ENCODE measurements at regions of chr10 and their contacts with region 1.

Region 1: DNA sequence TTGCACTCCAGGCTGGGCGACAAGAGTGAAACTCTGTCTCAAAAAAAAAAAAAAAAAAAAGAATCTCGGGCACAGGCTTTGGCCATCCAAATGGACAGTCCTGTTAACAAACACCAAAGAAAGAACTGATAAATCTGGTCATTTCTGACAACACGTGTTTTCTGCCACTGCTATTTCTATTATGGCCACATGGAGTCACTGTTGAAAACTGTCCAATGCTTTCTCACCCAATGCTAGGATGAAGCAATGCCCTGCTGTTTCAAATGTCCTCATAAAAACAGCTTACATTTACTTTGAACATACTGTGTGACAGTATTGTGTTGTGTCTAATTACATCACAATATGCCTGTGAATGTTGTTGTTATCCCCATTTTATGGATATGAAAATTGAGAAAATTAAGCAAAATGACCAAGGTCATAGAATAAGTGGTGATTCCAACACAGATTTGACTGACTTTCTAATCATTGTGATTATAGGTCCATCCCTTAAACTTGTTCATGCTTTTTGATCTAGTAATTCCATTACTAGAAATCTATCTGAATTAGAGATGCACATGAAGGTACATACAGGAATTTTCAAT is 19.9 kb upstream of the MAP3K8 start:
- DNase-seq: peak in 6 of 35 experiments; percentile 14 to 76 (median 23)
- ATAC-seq: peak; percentile 47 to 67 (median 56)
- H3K4me3 ChIP-seq: no peak overlapping the region
- H3K4me3 Mint-ChIP-seq: no peak overlapping the region
- H3K27ac ChIP-seq: no peak overlapping the region
- H3K27ac Mint-ChIP-seq: no peak overlapping the region
- H3K4me1 ChIP-seq: peaks cover 7% of the 10 kb centered on the region in 2 experiments
- H3K4me1 Mint-ChIP-seq: peaks cover 15 to 21% (median 19%) of the 10 kb centered on the region in 3 donors
- H3K27me3 ChIP-seq: no peaks in the 10 kb centered on the region
- H3K27me3 Mint-ChIP-seq: no peaks in the 10 kb centered on the region

Region 2: DNA sequence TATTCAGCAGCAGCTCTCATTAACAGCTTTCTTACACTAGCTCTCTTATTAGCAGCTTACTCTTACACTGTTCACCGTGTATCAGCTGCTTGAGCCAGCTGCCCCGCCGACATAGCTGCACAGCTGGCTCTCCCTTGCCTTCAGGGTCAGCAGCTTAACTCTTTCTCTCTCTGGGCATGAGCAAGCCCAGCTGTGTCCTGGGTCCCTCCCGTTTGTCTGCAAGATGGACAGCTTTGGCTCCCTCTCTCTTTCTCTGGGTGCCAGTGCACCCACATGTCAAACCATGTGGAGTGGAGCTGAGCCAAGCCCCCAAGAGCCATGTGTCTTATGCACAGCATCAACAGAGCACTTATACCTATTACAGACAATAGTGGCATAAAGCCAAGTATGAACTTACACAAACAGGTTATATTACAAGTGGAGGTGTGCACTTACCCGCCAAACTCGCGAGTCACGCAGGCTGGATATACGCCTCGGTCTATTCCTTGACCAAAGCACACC is 29.3 kb before region 1 on chr10:
- CTCF ChIA-PET with region 1: interaction called in 1 of 2 experiments, 3 read pairs
- POLR2A ChIA-PET with region 1: interaction called, 3 to 11 read pairs
- DNase-seq: peak in 2 of 35 experiments; percentile 15 to 24
- ATAC-seq: peak in 1 of 4 experiments; percentile 51
- H3K4me3 ChIP-seq: no peak overlapping the region
- H3K4me3 Mint-ChIP-seq: no peak overlapping the region
- H3K27ac ChIP-seq: no peak overlapping the region
- H3K27ac Mint-ChIP-seq: no peak overlapping the region
- H3K4me1 ChIP-seq: no peaks in the 10 kb centered on the region
- H3K4me1 Mint-ChIP-seq: no peaks in the 10 kb centered on the region
- H3K27me3 ChIP-seq: peaks cover 0 to 16% of the 10 kb centered on the region in 2 experiments
- H3K27me3 Mint-ChIP-seq: peaks cover 7 to 15% of the 10 kb centered on the region in 2 donors

Region 3: GRCh38 chr10:30403494-30403893 is 10.6 kb before region 1 on chr10:
- CTCF ChIA-PET with region 1: no interaction called
- POLR2A ChIA-PET with region 1: no interaction called
- DNase-seq: no peak
- ATAC-seq: no peak
- H3K4me3 ChIP-seq: no peak overlapping the region
- H3K4me3 Mint-ChIP-seq: no peak overlapping the region
- H3K27ac ChIP-seq: no peak overlapping the region
- H3K27ac Mint-ChIP-seq: no peak overlapping the region
- H3K4me1 ChIP-seq: peaks cover 3 to 8% of the 10 kb centered on the region in 2 experiments
- H3K4me1 Mint-ChIP-seq: peaks cover 7 to 9% (median 7%) of the 10 kb centered on the region in 3 donors
- H3K27me3 ChIP-seq: peaks cover 0 to 8% of the 10 kb centered on the region in 2 experiments
- H3K27me3 Mint-ChIP-seq: no peaks in the 10 kb centered on the region

Region 4: GRCh38 chr10:30534465-30535144 is 120.5 kb after region 1 on chr10:
- CTCF ChIA-PET with region 1: interaction called, 10 to 19 read pairs
- POLR2A ChIA-PET with region 1: interaction called in 1 of 2 experiments, 4 read pairs
- DNase-seq: peak; percentile 37 to 89 (median 63)
- ATAC-seq: peak; percentile 35 to 62 (median 54)
- H3K4me3 ChIP-seq: no peak overlapping the region
- H3K4me3 Mint-ChIP-seq: no peak overlapping the region
- H3K27ac ChIP-seq: no peak overlapping the region
- H3K27ac Mint-ChIP-seq: peak overlapping the region in 1 of 2 donors; percentile 6
- H3K4me1 ChIP-seq: peaks cover 0 to 36% of the 10 kb centered on the region in 2 experiments
- H3K4me1 Mint-ChIP-seq: peaks cover 14 to 37% (median 23%) of the 10 kb centered on the region in 3 donors
- H3K27me3 ChIP-seq: no peaks in the 10 kb centered on the region
- H3K27me3 Mint-ChIP-seq: peaks cover 0 to 3% of the 10 kb centered on the region in 2 donors

Region 5: GRCh38 chr10:30562787-30563186 is 148.7 kb after region 1 on chr10:
- CTCF ChIA-PET with region 1: no interaction called
- POLR2A ChIA-PET with region 1: no interaction called
- DNase-seq: no peak
- ATAC-seq: no peak
- H3K4me3 ChIP-seq: no peak overlapping the region
- H3K4me3 Mint-ChIP-seq: no peak overlapping the region
- H3K27ac ChIP-seq: no peak overlapping the region
- H3K27ac Mint-ChIP-seq: no peak overlapping the region
- H3K4me1 ChIP-seq: no peaks in the 10 kb centered on the region
- H3K4me1 Mint-ChIP-seq: no peaks in the 10 kb centered on the region
- H3K27me3 ChIP-seq: peaks cover 0 to 10% of the 10 kb centered on the region in 2 experiments
- H3K27me3 Mint-ChIP-seq: peaks cover 4 to 19% of the 10 kb centered on the region in 2 donors